ENCODE measurements at regions of chr17 and their contacts with region 1.

Region 1: GRCh38 chr17:7252176-7253043 is at the start of gene ELP5:
- DNase-seq: peak; percentile 86
- H3K4me3 Mint-ChIP-seq: peak within 1 kb of the TSS; percentile 98
- H3K27ac Mint-ChIP-seq: peak within 1 kb of the TSS; percentile 99
- H3K4me1 Mint-ChIP-seq: peaks cover 42% of the 10 kb centered on the region
- H3K27me3 Mint-ChIP-seq: peaks cover 5% of the 10 kb centered on the region
- total RNA-seq, gene ELP5: 73.6 and 75.5 TPM in 2 replicates

Region 2: GRCh38 chr17:7214300-7215135 is 37.9 kb before region 1 on chr17:
- intact Hi-C with region 1: loop called (anchors 1 kb)
- DNase-seq: peak; percentile 99
- H3K4me3 Mint-ChIP-seq: peak overlapping the region; percentile 91
- H3K27ac Mint-ChIP-seq: peak overlapping the region; percentile 98
- H3K4me1 Mint-ChIP-seq: peaks cover 55% of the 10 kb centered on the region
- H3K27me3 Mint-ChIP-seq: peaks cover 14% of the 10 kb centered on the region

Region 3: GRCh38 chr17:7219812-7220581 is 32.4 kb before region 1 on chr17 and contains the starts of genes ACADVL and DLG4:
- intact Hi-C with region 1: loop called (anchors 1 kb)
- DNase-seq: peak; percentile 74
- H3K4me3 Mint-ChIP-seq: peak within 1 kb of the TSS; percentile 96
- H3K27ac Mint-ChIP-seq: peak within 1 kb of the TSS; percentile 96
- H3K4me1 Mint-ChIP-seq: peaks cover 54% of the 10 kb centered on the region
- H3K27me3 Mint-ChIP-seq: peaks cover 2% of the 10 kb centered on the region
- total RNA-seq, gene ACADVL: 287 and 294 TPM in 2 replicates
- total RNA-seq, gene DLG4: 15.3 and 15.5 TPM in 2 replicates

Region 4: DNA sequence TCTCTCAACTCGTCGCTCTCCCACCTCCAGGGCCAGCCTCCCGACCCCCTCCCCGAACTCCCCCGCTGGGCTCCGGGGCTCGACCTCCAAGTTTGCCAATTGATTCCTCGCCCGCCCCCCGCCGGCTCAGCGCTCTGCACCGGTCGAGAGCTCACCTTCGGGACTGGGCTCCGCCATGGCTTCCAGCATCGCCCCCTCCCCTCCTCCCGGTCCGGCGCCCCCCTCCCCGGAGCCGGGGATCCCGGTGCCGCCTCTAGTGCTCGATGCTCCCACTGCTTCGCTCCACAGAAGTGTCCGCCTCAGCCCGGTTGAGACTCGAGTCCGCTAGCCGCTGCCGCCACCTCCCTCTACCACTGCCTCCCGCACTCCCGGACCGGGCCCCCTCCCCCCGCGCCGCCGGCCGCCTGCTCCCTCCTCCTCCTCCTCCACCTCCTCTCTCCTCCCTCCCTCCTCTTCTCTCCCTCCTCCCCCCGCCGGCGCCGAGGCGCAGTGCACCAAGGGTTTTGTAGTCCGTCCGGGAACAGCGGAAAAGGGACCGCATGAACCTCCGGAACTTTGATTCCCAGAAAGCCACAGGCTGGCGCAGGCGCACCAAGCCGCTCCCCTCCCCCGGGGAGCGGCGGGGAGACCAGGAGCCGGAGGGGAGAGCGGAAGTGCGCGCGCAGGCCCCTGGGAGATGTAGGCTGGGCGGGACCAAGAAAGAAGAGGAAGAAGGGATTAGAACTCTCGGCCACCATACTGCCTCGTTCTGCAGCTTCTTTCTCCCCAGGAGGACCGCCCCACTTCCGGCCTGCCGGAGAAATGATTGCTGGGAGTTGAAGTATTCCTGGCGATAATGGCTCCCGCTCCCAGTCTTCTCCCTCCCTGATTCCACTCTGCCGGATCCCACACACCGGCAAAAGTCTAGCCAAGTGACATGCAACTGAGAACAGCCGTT is 13.1 kb before region 1 on chr17 and contains the start of gene PHF23:
- intact Hi-C with region 1: loop called (anchors 1 kb)
- DNase-seq: peak; percentile 98
- H3K4me3 Mint-ChIP-seq: peak within 1 kb of the TSS; percentile 97
- H3K27ac Mint-ChIP-seq: peak within 1 kb of the TSS; percentile 94
- H3K4me1 Mint-ChIP-seq: peaks cover 68% of the 10 kb centered on the region
- H3K27me3 Mint-ChIP-seq: no peaks in the 10 kb centered on the region
- total RNA-seq, gene PHF23: 52.5 and 55.4 TPM in 2 replicates

Region 5: DNA sequence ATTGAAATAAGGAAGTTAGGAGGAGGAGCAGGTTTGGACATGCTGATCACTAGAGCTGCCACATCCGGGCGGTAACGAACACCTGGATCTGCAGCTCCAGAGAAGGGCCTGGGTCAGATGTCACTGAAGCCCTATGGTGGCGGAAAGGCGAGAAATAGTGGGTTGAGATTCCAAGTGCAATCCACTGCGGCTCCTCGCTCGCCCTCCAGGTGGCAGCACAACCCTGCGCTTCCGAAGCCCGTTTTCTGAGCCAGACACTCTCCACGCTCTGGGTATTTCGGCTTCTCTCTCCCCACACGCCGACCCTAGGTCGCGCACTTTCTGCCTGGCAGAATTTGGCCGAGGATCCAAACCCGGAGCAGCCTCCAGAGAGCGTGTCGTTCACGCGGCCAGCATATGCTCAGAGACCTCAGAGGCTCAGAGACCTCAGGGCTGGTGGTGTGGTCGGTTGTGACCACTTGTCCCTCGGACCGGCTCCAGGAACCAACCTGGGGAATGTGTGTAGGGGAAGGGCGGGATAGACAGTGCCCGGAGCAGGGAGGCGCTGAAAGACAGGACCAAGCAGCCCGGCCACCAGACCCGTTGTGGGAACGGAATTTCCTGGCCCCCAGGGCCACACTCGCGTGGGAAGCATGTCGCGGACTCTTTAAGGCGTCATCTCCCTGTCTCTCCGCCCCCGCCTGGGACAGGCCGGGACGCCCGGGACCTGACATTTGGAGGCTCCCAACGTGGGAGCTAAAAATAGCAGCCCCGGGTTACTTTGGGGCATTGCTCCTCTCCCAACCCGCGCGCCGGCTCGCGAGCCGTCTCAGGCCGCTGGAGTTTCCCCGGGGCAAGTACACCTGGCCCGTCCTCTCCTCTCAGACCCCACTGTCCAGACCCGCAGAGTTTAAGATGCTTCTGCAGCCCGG is 28.4 kb after region 1 on chr17:
- intact Hi-C with region 1: no loop called
- DNase-seq: peak; percentile 69
- H3K4me3 Mint-ChIP-seq: peak overlapping the region; percentile 79
- H3K27ac Mint-ChIP-seq: peak overlapping the region; percentile 40
- H3K4me1 Mint-ChIP-seq: peaks cover 16% of the 10 kb centered on the region
- H3K27me3 Mint-ChIP-seq: peaks cover 33% of the 10 kb centered on the region

Region 6: GRCh38 chr17:7296189-7296902 is 43.9 kb after region 1 on chr17:
- intact Hi-C with region 1: loop called (anchors 1 kb)
- DNase-seq: peak; percentile 63
- H3K4me3 Mint-ChIP-seq: peak overlapping the region; percentile 22
- H3K27ac Mint-ChIP-seq: no peak overlapping the region
- H3K4me1 Mint-ChIP-seq: peaks cover 16% of the 10 kb centered on the region
- H3K27me3 Mint-ChIP-seq: peaks cover 34% of the 10 kb centered on the region

Region 7: GRCh38 chr17:7314719-7315569 is 62.5 kb after region 1 on chr17 and contains the start of gene GPS2:
- intact Hi-C with region 1: no loop called
- DNase-seq: peak; percentile 91
- H3K4me3 Mint-ChIP-seq: peak within 1 kb of the TSS; percentile 90
- H3K27ac Mint-ChIP-seq: peak within 1 kb of the TSS; percentile 88
- H3K4me1 Mint-ChIP-seq: peaks cover 41% of the 10 kb centered on the region
- H3K27me3 Mint-ChIP-seq: no peaks in the 10 kb centered on the region
- total RNA-seq, gene GPS2: 52.3 and 59.0 TPM in 2 replicates

Region 8: DNA sequence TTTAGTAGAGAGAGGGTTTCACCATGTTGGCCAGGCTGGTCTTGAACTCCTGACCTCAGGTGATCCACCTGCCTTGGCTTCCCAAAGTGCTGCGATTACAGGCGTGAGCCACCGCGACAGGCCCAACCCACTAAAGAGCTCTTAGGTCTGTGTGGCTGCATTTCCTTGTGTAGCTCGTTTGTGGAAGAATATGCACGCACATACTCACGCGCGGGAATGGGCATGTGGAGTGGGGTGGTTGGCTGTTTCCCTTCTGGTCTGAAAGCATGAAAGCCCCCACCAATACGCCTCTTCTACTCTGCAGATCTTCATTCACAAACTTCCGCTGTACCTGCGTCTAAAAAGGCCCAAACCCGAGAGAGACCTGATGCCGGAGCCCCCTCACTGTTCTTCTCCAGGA is 202.6 kb after region 1 on chr17:
- intact Hi-C with region 1: loop called (anchors 1 kb)
- DNase-seq: no peak
- H3K4me3 Mint-ChIP-seq: peak overlapping the region; percentile 87
- H3K27ac Mint-ChIP-seq: peak overlapping the region; percentile 88
- H3K4me1 Mint-ChIP-seq: peaks cover 31% of the 10 kb centered on the region
- H3K27me3 Mint-ChIP-seq: no peaks in the 10 kb centered on the region

Measured in activated T-helper 1 cell treated with anti-CD3 and anti-CD28 coated beads, Interleukin-12 subunit alpha, Interleukin-12 subunit beta, Interleukin-2, Interleukin-4 antibody, amounts not matched to agents 30 ng/mL and 10 ng/mL and 1 ng/mL, durations not matched to agents 14 hours and 24 hours and 36 hours (primary cell).